ENCODE measurements at regions of chr3 and their contacts with region 1.

Region 1: GRCh38 chr3:4493014-4493940 is at the start of gene ITPR1:
- DNase-seq: peak; percentile 97 to 99 (median 98)
- H3K4me3 ChIP-seq: peak within 1 kb of the TSS; percentile 76 to 87
- H3K4me3 Mint-ChIP-seq: peak within 1 kb of the TSS; percentile 91 to 98 (median 96)
- H3K27ac ChIP-seq: peak within 1 kb of the TSS; percentile 71
- H3K27ac Mint-ChIP-seq: peak within 1 kb of the TSS; percentile 90 to 95 (median 94)
- H3K4me1 ChIP-seq: peaks cover 41% of the 10 kb centered on the region
- H3K4me1 Mint-ChIP-seq: peaks cover 27 to 51% (median 42%) of the 10 kb centered on the region in 4 donors
- H3K27me3 ChIP-seq: no peaks in the 10 kb centered on the region
- H3K27me3 Mint-ChIP-seq: peaks cover 2 to 3% of the 10 kb centered on the region in 2 donors
- total RNA-seq, gene ITPR1: 72.4 to 72.8 TPM

Region 2: GRCh38 chr3:3126477-3127431 is 1366.5 kb before region 1 on chr3 and contains the start of gene TRNT1:
- CTCF ChIA-PET with region 1: no interaction called
- POLR2A ChIA-PET with region 1: no interaction called
- intact Hi-C with region 1: loop called (anchors 5 kb)
- DNase-seq: peak; percentile 94 to 96 (median 95)
- H3K4me3 ChIP-seq: peak within 1 kb of the TSS; percentile 80 to 89
- H3K4me3 Mint-ChIP-seq: peak within 1 kb of the TSS; percentile 95 to 98 (median 96)
- H3K27ac ChIP-seq: peak within 1 kb of the TSS; percentile 93
- H3K27ac Mint-ChIP-seq: peak within 1 kb of the TSS; percentile 98 to 100 (median 99)
- H3K4me1 ChIP-seq: peaks cover 37% of the 10 kb centered on the region
- H3K4me1 Mint-ChIP-seq: peaks cover 21 to 50% (median 40%) of the 10 kb centered on the region in 4 donors
- H3K27me3 ChIP-seq: no peaks in the 10 kb centered on the region
- H3K27me3 Mint-ChIP-seq: no peaks in the 10 kb centered on the region
- total RNA-seq, gene TRNT1: 44.7 to 44.8 TPM

Region 3: DNA sequence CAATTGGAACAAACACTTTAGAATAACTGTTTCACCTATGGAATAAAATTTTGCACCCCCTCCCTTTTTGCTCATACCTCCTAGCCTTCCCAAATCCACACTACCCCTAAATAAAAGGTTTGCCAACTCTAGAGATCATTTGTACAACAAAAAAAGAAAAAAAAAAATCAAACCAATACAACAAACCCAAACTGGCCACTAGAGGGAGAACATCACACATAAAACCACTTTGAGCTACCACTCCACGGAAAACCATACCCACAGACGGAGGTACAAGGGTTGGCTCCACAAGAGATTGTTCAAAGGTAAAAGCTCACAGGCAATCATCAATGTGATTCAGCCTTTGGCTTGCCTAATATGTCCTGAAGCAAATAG is 142.5 kb before region 1 on chr3:
- CTCF ChIA-PET with region 1: interaction called, 27 read pairs
- POLR2A ChIA-PET with region 1: interaction called, 17 read pairs
- intact Hi-C with region 1: loop called (anchors 1 kb)
- DNase-seq: peak; percentile 65 to 72 (median 70)
- H3K4me3 ChIP-seq: peak overlapping the region in 1 of 2 donors; percentile 45
- H3K4me3 Mint-ChIP-seq: peak overlapping the region; percentile 59 to 84 (median 76)
- H3K27ac ChIP-seq: no peak overlapping the region
- H3K27ac Mint-ChIP-seq: peak overlapping the region in 5 of 7 donors; percentile 20 to 66 (median 33)
- H3K4me1 ChIP-seq: peaks cover 4% of the 10 kb centered on the region
- H3K4me1 Mint-ChIP-seq: peaks cover 8 to 18% (median 10%) of the 10 kb centered on the region in 4 donors
- H3K27me3 ChIP-seq: no peaks in the 10 kb centered on the region
- H3K27me3 Mint-ChIP-seq: no peaks in the 10 kb centered on the region

Region 4: DNA sequence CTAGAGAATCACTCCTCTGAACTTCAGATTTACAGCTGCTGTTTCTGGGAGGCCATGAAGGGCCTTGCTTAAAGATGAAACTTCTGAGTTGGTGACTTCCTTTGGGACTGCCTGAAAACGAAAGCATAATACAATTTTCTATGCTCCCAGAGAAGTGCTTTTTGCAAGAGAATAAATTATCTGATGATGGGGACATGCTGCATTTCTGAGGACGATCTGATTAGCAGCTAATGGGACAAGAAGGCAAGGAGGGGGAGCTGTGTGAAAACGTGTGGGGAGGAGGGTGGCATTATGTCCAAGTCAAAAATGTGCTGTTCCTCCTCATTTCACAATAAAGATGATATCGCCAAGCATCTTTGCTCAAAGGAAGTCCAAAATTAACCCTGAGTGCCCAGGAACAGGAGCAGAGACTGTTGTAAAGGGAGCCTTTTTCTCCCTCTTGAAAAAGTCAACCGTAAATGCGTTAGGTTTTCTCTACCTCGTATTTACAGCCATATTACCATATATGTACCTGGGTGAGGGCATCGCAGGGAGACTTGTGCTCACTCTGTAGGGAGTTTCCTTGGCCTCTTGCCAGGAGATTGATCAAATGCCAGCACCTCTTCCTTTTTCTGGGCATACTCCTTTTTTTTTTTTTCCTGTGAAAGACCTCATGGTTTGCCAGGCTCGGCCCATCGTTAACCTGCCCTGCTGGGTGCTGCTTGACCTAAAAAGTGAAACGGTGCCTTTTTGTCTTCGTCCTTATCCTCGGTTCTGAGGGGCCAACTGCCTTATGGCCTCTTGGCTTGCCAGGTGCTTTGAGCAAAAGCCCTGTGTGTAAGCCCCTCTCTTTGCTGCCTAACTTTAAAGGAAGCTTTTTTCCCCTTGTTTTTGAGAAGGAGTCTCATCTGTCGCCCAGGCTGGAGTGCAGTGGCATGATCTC is 11.3 kb after region 1 on chr3:
- CTCF ChIA-PET with region 1: interaction called, 28 read pairs
- POLR2A ChIA-PET with region 1: interaction called, 60 read pairs
- intact Hi-C with region 1: loop called (anchors 1 kb)
- DNase-seq: peak; percentile 46 to 61 (median 54)
- H3K4me3 ChIP-seq: peak overlapping the region; percentile 43 to 48
- H3K4me3 Mint-ChIP-seq: peak overlapping the region; percentile 79 to 96 (median 84)
- H3K27ac ChIP-seq: peak overlapping the region; percentile 56
- H3K27ac Mint-ChIP-seq: peak overlapping the region; percentile 89 to 96 (median 93)
- H3K4me1 ChIP-seq: peaks cover 42% of the 10 kb centered on the region
- H3K4me1 Mint-ChIP-seq: peaks cover 33 to 52% (median 40%) of the 10 kb centered on the region in 4 donors
- H3K27me3 ChIP-seq: no peaks in the 10 kb centered on the region
- H3K27me3 Mint-ChIP-seq: no peaks in the 10 kb centered on the region

Region 5: DNA sequence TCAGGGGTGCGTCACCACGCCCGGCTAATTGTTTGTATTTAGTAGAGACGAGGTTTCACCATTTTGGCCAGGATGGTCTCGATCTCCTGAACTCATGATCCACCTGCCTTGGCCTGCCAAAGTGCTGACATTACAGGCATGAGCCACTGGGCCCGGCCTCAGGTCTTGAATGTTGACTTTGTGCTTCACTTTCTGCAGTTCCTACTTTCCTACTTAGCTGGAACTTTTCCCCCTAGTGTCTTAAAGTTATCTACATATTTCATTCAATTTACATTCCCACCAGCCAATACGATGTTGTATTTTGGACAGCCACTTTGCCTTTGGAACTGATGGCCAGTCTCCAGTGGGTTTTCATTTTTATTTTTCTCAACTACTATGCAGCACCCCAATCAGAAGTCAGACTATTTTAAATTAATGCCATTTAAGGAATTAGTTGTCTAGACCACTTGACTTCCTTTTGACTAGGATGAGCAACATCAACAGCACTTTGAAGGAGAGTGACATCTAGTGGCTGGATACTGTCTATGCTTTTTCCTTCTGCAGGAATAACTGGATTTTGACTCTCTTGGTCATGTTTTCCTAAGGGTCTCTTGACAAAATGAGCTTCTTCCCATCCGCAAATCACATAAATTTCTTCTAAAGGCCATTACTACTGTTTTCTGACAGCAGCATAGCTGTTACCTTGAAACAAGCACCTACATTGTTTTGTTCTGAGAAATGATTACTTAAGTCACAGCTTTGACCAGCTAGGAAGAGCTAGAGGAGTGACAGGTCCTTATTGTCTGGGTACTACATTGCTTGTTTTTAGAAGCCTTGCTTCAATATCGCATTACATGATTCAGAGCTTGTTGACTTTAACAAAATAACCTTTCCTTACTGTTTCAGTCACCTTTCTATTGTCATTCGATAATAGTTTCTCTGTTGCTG is 140.1 kb after region 1 on chr3:
- CTCF ChIA-PET with region 1: interaction called, 13 read pairs
- POLR2A ChIA-PET with region 1: interaction called, 4 read pairs
- intact Hi-C with region 1: loop called (anchors 1 kb)
- DNase-seq: peak in 4 of 5 donors; percentile 38 to 50 (median 44)
- H3K4me3 ChIP-seq: no peak overlapping the region
- H3K4me3 Mint-ChIP-seq: no peak overlapping the region
- H3K27ac ChIP-seq: no peak overlapping the region
- H3K27ac Mint-ChIP-seq: peak overlapping the region in 1 of 7 donors; percentile 52
- H3K4me1 ChIP-seq: no peaks in the 10 kb centered on the region
- H3K4me1 Mint-ChIP-seq: peaks cover 6 to 11% (median 8%) of the 10 kb centered on the region in 4 donors
- H3K27me3 ChIP-seq: no peaks in the 10 kb centered on the region
- H3K27me3 Mint-ChIP-seq: no peaks in the 10 kb centered on the region

Region 6: GRCh38 chr3:5187156-5187919 is 694.1 kb after region 1 on chr3 and contains the start of gene EDEM1:
- CTCF ChIA-PET with region 1: no interaction called
- POLR2A ChIA-PET with region 1: interaction called, 9 read pairs
- intact Hi-C with region 1: loop called (anchors 5 kb)
- DNase-seq: peak; percentile 92 to 94 (median 93)
- H3K4me3 ChIP-seq: peak within 1 kb of the TSS; percentile 80 to 85
- H3K4me3 Mint-ChIP-seq: peak within 1 kb of the TSS; percentile 93 to 100 (median 98)
- H3K27ac ChIP-seq: peak within 1 kb of the TSS; percentile 87
- H3K27ac Mint-ChIP-seq: peak within 1 kb of the TSS; percentile 98 to 99 (median 99)
- H3K4me1 ChIP-seq: peaks cover 16% of the 10 kb centered on the region
- H3K4me1 Mint-ChIP-seq: peaks cover 26 to 46% (median 32%) of the 10 kb centered on the region in 4 donors
- H3K27me3 ChIP-seq: no peaks in the 10 kb centered on the region
- H3K27me3 Mint-ChIP-seq: no peaks in the 10 kb centered on the region
- total RNA-seq, gene EDEM1: 146 to 153 TPM

Measured in CD4-positive, alpha-beta memory T cell (primary cell).